Activated T-helper 2 cell treated with anti-CD3 and anti-CD28 coated beads, Interferon-gamma antibody, Interleukin-2, Interleukin-4, amounts not matched to agents 10 μg/mL and 5 μg/mL and 100 μg/mL, durations not matched to agents 14 hours and 24 hours and 36 hours (primary cell): ENCODE measurements at regions of chr14 and their contacts with region 1.

Region 1: GRCh38 chr14:65434214-65434850 is 21.8 kb downstream of the FUT8 start:
- DNase-seq: no peak
- H3K4me3 Mint-ChIP-seq: no peak overlapping the region
- H3K27ac Mint-ChIP-seq: peak overlapping the region; percentile 46
- H3K4me1 Mint-ChIP-seq: peaks cover 57% of the 10 kb centered on the region
- H3K27me3 Mint-ChIP-seq: no peaks in the 10 kb centered on the region

Region 2: DNA sequence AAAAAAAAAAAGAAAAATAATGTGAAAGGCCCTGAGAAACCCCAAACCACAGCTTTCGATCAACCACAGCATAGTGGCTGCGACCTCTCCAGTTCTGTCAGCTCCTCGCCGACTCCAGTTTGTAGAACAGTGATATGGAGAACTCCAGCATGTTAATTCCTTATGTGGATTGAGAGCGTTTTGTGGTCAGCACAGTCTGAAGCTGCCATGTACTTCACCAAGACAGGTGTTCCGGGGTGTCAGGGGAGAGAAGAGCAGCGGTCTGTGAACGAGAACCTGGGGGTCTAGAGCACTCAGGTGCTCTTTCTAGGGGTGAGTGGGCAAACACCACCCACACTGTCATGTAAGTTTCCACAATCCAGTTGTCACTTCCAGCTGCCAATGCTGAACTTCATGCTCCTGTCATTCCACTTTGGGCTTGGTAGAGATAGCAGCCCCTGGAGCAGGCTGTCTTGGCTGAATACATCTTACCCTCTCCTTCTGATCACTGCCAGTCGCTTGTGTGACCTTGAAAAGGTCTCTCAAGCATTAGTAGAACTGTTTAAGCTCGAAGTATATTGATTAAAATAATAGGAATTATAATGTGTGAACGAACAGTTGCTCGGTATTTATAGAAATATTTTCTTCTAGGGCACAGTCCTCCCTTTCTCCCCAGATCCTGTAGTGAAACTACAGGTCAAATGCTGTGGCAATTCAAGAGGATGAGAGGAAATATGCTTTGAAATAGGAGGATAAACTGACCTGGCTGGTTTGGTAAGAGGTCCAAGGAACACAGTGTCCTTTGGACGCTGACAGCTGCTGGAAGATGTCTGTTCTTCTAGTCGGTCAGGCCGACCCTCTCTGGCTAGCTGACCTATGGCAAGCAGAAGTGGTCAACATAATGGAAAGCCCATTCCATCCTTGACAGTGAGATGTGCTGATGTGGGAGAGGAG is 316.3 kb before region 1 on chr14:
- intact Hi-C with region 1: no loop called
- DNase-seq: no peak
- H3K4me3 Mint-ChIP-seq: no peak overlapping the region
- H3K27ac Mint-ChIP-seq: no peak overlapping the region
- H3K4me1 Mint-ChIP-seq: peaks cover 4% of the 10 kb centered on the region
- H3K27me3 Mint-ChIP-seq: peaks cover 5% of the 10 kb centered on the region

Region 3: DNA sequence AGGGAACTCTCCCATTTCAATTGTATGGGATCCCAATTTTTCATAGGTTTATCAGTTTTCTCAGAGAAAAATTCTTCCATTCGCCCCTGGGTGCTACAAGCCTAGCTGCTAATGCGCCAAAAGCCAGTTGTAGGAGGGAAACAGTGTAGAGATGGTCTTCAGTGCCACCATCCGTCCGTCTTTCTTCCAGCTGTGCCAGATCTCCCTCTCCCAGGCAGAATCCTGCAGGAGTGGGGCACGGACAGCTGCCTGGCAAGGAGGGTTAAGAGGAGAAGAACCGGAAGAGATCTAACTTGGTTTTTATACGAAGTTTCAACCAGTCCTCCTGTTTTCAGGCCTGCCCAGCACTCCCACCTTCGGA is 60.7 kb before region 1 on chr14:
- intact Hi-C with region 1: loop called (anchors 1 kb)
- DNase-seq: no peak
- H3K4me3 Mint-ChIP-seq: no peak overlapping the region
- H3K27ac Mint-ChIP-seq: peak overlapping the region; percentile 50
- H3K4me1 Mint-ChIP-seq: peaks cover 42% of the 10 kb centered on the region
- H3K27me3 Mint-ChIP-seq: no peaks in the 10 kb centered on the region

Region 4: GRCh38 chr14:65462411-65462810 is 28.1 kb after region 1 on chr14:
- intact Hi-C with region 1: loop called (anchors 1 kb)
- DNase-seq: no peak
- H3K4me3 Mint-ChIP-seq: peak overlapping the region; percentile 34
- H3K27ac Mint-ChIP-seq: peak overlapping the region; percentile 87
- H3K4me1 Mint-ChIP-seq: peaks cover 48% of the 10 kb centered on the region
- H3K27me3 Mint-ChIP-seq: no peaks in the 10 kb centered on the region

Region 5: DNA sequence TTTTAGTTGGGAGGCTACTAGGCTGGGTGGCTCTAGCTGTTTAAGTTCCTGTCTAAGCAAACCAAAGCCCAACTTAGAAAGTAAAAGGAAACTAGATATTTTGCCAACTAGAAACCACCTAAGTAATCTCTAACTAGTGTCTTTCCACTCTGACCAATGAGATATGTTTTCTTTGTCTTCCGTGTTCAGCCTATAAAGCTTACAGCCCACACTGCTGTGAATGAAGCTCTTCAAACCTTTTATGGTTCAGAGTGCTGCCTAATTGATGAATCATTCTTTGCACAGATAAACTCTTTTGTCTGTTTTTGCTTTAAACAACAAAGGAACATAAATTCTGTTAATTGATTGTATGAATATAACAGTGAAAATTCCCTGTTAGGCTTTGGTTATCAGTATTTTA is 44.3 kb after region 1 on chr14:
- intact Hi-C with region 1: loop called (anchors 1 kb)
- DNase-seq: no peak
- H3K4me3 Mint-ChIP-seq: no peak overlapping the region
- H3K27ac Mint-ChIP-seq: peak overlapping the region; percentile 19
- H3K4me1 Mint-ChIP-seq: peaks cover 73% of the 10 kb centered on the region
- H3K27me3 Mint-ChIP-seq: no peaks in the 10 kb centered on the region

Region 6: GRCh38 chr14:65517635-65518542 is 83.6 kb after region 1 on chr14:
- intact Hi-C with region 1: loop called (anchors 5 kb)
- DNase-seq: no peak
- H3K4me3 Mint-ChIP-seq: no peak overlapping the region
- H3K27ac Mint-ChIP-seq: peak overlapping the region; percentile 88
- H3K4me1 Mint-ChIP-seq: peaks cover 40% of the 10 kb centered on the region
- H3K27me3 Mint-ChIP-seq: no peaks in the 10 kb centered on the region

Region 7: GRCh38 chr14:65565948-65566347 is 131.6 kb after region 1 on chr14:
- intact Hi-C with region 1: no loop called
- DNase-seq: no peak
- H3K4me3 Mint-ChIP-seq: no peak overlapping the region
- H3K27ac Mint-ChIP-seq: no peak overlapping the region
- H3K4me1 Mint-ChIP-seq: peaks cover 32% of the 10 kb centered on the region
- H3K27me3 Mint-ChIP-seq: no peaks in the 10 kb centered on the region

Region 8: GRCh38 chr14:65704850-65705249 is 270.5 kb after region 1 on chr14:
- intact Hi-C with region 1: loop called (anchors 10 kb)
- DNase-seq: no peak
- H3K4me3 Mint-ChIP-seq: no peak overlapping the region
- H3K27ac Mint-ChIP-seq: no peak overlapping the region
- H3K4me1 Mint-ChIP-seq: peaks cover 6% of the 10 kb centered on the region
- H3K27me3 Mint-ChIP-seq: no peaks in the 10 kb centered on the region